AG04450 (cell line): ENCODE measurements at regions of chr14 and their contacts with region 1.

Region 1: GRCh38 chr14:50631408-50631821 is 36.7 kb downstream of the SAV1 start:
- DNase-seq: no peak
- H3K4me3 ChIP-seq: no peak overlapping the region
- H3K27ac ChIP-seq: no peak overlapping the region
- H3K27me3 ChIP-seq: no peaks in the 10 kb centered on the region
- CTCF ChIP-seq: no peak

Region 2: GRCh38 chr14:50619556-50620141 is 11.8 kb before region 1 on chr14:
- CTCF ChIA-PET with region 1: interaction called, 13 read pairs
- POLR2A ChIA-PET with region 1: no interaction called
- DNase-seq: no peak
- H3K4me3 ChIP-seq: no peak overlapping the region
- H3K27ac ChIP-seq: no peak overlapping the region
- H3K27me3 ChIP-seq: no peaks in the 10 kb centered on the region
- CTCF ChIP-seq: peak; percentile 71

Region 3: DNA sequence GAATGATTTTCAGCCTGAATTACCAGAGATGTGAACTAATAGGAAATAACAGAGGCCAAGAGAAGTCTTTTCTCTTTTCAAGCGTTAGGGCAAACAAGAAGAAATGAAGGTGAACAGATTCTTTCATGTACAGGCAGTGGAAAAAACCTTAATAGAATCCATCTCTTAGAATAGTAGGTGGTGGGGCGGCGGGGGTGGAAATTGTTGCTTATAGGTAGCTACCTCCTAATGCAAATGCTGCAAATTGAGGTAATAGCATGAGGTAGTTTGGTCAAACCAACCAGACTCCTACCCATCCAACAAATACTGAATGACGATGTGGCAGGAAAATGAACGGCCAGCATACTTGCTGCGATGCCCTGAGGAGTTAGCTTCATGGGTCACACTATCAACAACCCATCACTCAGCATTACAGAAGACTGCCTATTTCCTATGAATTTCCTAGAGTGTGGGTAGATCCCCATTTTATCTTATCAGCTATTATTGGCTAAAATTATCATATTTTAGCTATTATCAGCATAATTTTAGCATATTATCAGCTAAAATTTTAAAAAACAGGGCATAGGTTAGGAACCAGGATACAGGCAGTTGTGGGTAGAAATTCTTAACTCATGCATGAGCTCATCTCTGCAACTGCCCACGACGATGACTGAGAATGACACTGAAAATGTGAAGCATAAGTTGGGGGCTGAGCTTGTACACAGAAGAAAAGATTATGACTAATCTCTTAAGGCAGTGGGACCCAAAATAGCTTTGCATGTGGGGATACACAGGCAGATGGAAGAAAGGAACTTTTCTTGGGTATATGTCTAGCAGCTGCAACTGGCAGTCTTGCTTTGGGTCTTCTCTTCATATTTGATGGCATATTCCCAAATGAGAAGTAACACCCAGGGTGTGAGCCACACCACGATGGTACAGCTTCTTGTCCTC is 130.9 kb after region 1 on chr14:
- CTCF ChIA-PET with region 1: no interaction called
- POLR2A ChIA-PET with region 1: no interaction called
- DNase-seq: peak; percentile 38
- H3K4me3 ChIP-seq: no peak overlapping the region
- H3K27ac ChIP-seq: no peak overlapping the region
- H3K27me3 ChIP-seq: no peaks in the 10 kb centered on the region
- CTCF ChIP-seq: no peak